ENCODE measurements at regions of chr18 and their contacts with region 1.

Region 1: GRCh38 chr18:11518788-11519685 is 90.4 kb upstream of the SLC35G4 start:
- DNase-seq: peak; percentile 38 to 85
- H3K4me3 ChIP-seq: 0 out of 8 replicates have a peak overlapping the region, but pooled peaks of 1 of the 4 experiments have one; percentile 8
- H3K27ac ChIP-seq: no peak overlapping the region
- H3K4me1 ChIP-seq: no peaks in the 10 kb centered on the region; a peak in 1 of 7 replicates
- H3K27me3 ChIP-seq: peaks cover 0 to 2% (median under 1%) of the 10 kb centered on the region in 4 experiments; a peak in 5 of 7 replicates
- CTCF ChIP-seq: peak; percentile 91 to 100 (median 99)
- EP300 ChIP-seq: no peak
- POLR2A ChIP-seq: no peak
- RAD21 ChIP-seq: peak; percentile 76 to 84

Region 2: DNA sequence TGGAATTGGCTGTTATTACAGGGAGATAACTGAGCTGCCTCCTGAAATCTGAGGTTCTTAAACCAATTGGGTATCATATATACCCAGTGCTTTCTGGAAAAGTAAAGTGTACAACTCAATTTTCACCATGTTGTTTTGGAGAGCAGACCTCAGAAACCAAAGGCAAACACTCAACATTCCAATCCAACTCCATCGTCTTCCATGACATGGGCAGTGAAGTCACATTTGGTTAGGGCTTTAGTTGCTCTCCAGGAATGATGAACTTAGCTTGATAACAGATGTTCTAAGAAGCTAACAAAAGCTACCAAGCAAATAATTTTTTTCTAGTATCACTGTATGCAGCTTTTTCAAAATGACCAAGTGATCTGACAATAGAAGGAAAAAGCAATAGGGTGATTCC is 16.7 kb before region 1 on chr18:
- CTCF ChIA-PET with region 1: interaction called, 15 read pairs
- POLR2A ChIA-PET with region 1: no interaction called
- DNase-seq: no peak
- H3K4me3 ChIP-seq: no peak overlapping the region
- H3K27ac ChIP-seq: no peak overlapping the region
- H3K4me1 ChIP-seq: no peaks in the 10 kb centered on the region
- H3K27me3 ChIP-seq: no peaks in the 10 kb centered on the region
- CTCF ChIP-seq: no peak
- EP300 ChIP-seq: no peak
- POLR2A ChIP-seq: no peak
- RAD21 ChIP-seq: no peak

Region 3: GRCh38 chr18:11529081-11529480 is 10.0 kb after region 1 on chr18:
- CTCF ChIA-PET with region 1: interaction called, 18 read pairs
- POLR2A ChIA-PET with region 1: interaction called, 3 read pairs
- DNase-seq: no peak
- H3K4me3 ChIP-seq: no peak overlapping the region
- H3K27ac ChIP-seq: no peak overlapping the region
- H3K4me1 ChIP-seq: no peaks in the 10 kb centered on the region
- H3K27me3 ChIP-seq: no peaks in the 10 kb centered on the region; a peak in 1 of 7 replicates
- CTCF ChIP-seq: no peak
- EP300 ChIP-seq: no peak
- POLR2A ChIP-seq: no peak
- RAD21 ChIP-seq: no peak

Region 4: DNA sequence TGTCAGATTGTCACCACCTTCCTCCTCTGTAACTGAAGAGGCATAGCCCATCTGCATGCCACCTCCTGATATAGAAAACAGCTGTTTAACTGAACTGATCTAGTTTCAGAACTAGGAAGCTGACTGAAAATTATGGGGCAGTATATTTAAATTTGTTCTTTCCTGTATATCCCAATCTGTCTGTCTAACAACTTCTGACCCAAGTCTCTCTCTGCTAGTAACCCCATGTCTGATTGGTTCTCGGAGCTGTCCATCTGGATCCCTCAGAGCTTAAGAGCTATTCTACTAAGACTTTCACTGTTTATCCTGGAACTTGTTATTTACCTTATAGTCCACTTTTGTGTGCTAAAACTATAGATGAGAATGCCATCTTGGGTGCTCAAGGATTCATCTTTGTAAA is 22.2 kb after region 1 on chr18:
- CTCF ChIA-PET with region 1: interaction called, 10 read pairs
- POLR2A ChIA-PET with region 1: no interaction called
- DNase-seq: no peak
- H3K4me3 ChIP-seq: no peak overlapping the region
- H3K27ac ChIP-seq: no peak overlapping the region
- H3K4me1 ChIP-seq: peaks cover 0 to 2% (median under 1%) of the 10 kb centered on the region in 4 experiments; a peak in 1 of 7 replicates
- H3K27me3 ChIP-seq: no peaks in the 10 kb centered on the region
- CTCF ChIP-seq: no peak
- EP300 ChIP-seq: no peak
- POLR2A ChIP-seq: no peak
- RAD21 ChIP-seq: no peak

Region 5: DNA sequence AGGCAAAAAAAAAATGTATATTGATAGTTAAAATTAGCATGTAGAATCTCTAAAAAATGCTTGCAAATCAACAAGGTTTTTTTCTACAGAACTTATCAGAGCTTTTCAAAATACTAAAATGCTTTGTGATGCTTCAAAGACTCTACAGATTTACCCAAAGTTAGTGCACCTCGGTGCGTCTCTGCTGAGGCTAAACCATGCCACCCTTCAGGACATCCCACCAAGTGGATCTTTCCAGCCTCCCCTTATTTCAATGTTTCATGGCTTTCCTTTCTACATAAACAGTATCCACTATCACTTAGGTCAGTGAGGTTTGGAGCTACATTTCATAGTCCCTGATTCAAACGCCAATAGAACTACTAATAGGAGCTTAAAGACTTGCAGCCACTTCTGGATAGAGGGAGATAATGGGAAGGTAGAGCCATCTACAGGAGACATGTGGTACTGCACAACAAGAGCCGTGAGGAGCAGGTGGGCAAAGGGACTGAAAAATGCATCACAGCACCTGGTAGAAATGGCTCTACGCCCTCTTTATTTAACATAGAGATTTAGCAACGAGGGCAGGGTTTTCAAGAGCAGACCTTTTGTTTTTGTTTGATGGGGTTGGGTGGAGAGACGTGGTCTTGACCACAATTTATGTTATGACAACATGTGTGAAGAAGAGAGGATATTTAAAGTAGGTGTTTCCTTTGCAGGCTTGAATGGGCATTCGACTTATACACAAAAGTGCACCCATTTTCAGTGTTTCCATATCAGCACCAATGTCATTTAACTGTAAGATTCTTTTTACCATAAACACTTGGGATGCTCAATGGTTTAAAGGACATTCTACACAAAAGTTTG is 34.3 kb after region 1 on chr18:
- CTCF ChIA-PET with region 1: interaction called, 36 read pairs
- POLR2A ChIA-PET with region 1: no interaction called
- DNase-seq: peak; percentile 15 to 78
- H3K4me3 ChIP-seq: no peak overlapping the region
- H3K27ac ChIP-seq: no peak overlapping the region
- H3K4me1 ChIP-seq: no peaks in the 10 kb centered on the region
- H3K27me3 ChIP-seq: no peaks in the 10 kb centered on the region
- CTCF ChIP-seq: peak; percentile 56 to 91 (median 73)
- EP300 ChIP-seq: no peak
- POLR2A ChIP-seq: no peak
- RAD21 ChIP-seq: peak; percentile 89 to 90